ENCODE measurements at regions of chr19 and their contacts with region 1.

Region 1: DNA sequence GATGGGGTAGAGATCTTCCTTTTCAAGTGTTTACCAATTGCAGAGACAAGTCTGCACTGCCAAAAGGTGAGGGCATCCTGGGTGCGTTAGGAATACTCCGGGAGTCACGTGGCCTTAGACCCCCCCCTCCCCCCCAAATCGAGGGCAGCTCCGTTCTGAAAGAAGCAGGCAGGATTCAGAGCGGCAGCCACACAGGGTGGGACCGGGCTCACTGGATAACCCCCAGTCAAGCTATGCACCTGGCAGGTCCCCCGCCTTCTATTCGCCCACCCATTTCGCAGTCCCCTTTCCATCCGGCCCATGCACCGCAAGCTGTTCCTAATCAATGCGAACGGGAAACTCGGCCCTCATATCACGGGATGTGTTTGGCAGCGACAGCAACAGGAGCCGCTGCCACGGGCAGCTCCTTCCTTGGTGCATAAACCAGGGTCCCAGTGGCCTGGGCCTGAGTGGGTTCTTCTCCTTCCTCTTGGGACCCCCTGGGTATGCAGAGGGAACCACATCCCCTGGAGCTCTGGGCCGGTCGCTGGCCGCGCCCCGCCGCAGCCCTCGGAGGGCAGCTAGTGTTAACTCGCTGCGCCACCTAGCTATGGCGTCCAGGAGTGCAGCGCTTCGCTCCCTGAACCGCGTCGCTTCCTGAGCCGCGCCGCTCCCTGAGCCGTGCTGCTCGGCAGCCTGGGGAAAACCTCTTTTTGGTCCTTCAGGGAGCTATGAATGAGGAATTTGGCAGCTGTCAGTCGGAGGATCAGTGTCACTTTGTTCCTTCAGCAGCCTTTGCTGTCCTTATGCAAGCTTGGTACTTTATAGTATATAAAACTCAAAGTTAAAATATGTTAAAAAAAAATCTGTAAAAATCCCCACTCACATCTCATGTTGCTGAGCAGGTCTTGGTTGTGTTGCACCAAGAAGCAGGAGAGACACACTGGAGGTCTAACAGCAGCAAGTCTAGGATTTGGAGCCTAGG is 41.4 kb downstream of the LYL1 start:
- DNase-seq: peak; percentile 87
- H3K4me3 Mint-ChIP-seq: peak overlapping the region; percentile 71
- H3K27ac Mint-ChIP-seq: no peak overlapping the region
- H3K4me1 Mint-ChIP-seq: peaks cover 9% of the 10 kb centered on the region
- H3K27me3 Mint-ChIP-seq: peaks cover 4% of the 10 kb centered on the region

Region 2: DNA sequence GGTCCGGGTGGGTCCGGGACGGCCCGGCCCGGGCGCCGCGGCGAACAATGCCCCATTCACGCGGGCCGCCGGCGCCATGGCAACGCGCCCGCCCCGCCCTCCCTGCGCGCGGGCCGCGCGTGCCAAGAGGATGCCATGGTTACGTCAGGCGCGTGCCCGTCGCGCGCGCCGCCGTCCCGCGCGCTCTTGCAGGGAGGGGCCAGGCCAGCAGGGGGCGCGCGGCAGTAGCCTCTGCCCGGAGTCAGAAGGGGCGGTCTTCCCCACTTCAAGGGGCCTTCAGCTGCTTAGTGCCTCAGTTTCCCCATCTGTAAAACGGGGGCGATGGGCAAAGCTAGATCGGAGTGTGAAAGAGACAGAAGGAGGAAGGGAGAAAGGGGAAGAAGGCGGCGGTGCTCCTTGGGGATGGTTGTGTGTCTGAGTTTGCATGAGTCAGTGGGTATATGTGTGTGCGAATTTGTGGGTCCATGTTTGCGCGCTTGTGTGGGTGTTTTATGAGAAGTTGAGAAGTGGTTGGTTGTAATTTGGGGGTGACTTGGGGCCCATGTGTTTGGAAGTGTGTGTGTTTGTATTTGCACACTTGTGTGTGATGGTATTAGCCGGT is 77.6 kb before region 1 on chr19:
- CTCF ChIA-PET with region 1: interaction called, 110 read pairs
- intact Hi-C with region 1: loop called (anchors 1 kb)
- DNase-seq: peak; percentile 81
- H3K4me3 Mint-ChIP-seq: no peak overlapping the region
- H3K27ac Mint-ChIP-seq: no peak overlapping the region
- H3K4me1 Mint-ChIP-seq: no peaks in the 10 kb centered on the region
- H3K27me3 Mint-ChIP-seq: no peaks in the 10 kb centered on the region

Region 3: DNA sequence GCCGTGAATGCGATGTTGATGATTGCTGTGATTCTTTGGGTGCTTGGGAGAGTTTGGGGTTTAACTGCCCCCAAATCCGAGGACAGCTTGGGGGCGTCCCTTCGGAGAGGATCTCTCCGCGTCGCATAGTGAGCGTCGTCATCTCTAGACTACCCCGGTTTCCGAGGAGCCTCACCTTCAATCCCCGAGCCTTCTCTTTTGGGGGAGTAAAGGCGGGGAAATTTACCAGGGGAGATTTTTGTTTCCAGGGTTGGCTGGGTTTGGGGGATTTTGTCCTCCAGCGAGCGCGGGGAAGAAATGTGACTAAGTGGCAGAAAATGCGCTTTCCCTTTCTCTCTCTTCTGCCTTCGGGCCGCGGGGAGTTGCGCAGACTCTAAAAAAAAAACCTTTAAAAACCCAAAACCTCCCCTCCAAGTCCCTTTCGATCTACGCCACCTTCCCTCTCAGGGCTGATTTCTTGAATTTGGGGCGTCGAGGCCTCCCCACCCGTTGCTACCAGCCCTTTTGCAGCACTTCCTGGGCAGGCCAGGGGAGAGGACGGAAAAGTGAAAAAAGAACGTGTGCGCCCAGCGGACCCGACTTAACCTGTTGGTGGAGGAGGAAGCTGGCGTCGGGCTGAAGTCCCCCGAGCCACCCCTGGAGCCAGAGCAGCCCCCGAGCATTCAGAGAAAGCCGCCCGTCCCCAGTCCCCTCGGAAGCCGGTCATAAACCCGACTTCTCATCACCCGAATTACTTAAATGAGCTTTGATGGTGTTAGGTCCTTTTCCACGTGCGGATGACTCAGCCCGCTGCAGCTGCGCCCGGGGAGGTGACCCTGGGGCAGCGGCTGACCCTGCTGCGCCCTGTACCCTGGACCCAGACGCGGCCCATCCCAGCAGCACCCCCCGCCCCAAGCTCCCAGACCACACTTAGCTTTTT is 48.3 kb before region 1 on chr19:
- CTCF ChIA-PET with region 1: interaction called, 12 read pairs
- intact Hi-C with region 1: no loop called
- DNase-seq: peak; percentile 83
- H3K4me3 Mint-ChIP-seq: peak overlapping the region; percentile 73
- H3K27ac Mint-ChIP-seq: peak overlapping the region; percentile 83
- H3K4me1 Mint-ChIP-seq: peaks cover 22% of the 10 kb centered on the region
- H3K27me3 Mint-ChIP-seq: peaks cover 40% of the 10 kb centered on the region

Region 4: GRCh38 chr19:13033819-13034611 is 27.2 kb before region 1 on chr19:
- CTCF ChIA-PET with region 1: interaction called, 26 read pairs
- intact Hi-C with region 1: no loop called
- DNase-seq: peak; percentile 56
- H3K4me3 Mint-ChIP-seq: no peak overlapping the region
- H3K27ac Mint-ChIP-seq: no peak overlapping the region
- H3K4me1 Mint-ChIP-seq: no peaks in the 10 kb centered on the region
- H3K27me3 Mint-ChIP-seq: no peaks in the 10 kb centered on the region

Region 5: GRCh38 chr19:13093407-13094105 is 32.3 kb after region 1 on chr19:
- CTCF ChIA-PET with region 1: interaction called, 50 read pairs
- intact Hi-C with region 1: loop called (anchors 2 kb)
- DNase-seq: peak; percentile 90
- H3K4me3 Mint-ChIP-seq: no peak overlapping the region
- H3K27ac Mint-ChIP-seq: no peak overlapping the region
- H3K4me1 Mint-ChIP-seq: peaks cover 21% of the 10 kb centered on the region
- H3K27me3 Mint-ChIP-seq: peaks cover 29% of the 10 kb centered on the region

Measured in activated naive CD4-positive, alpha-beta T cell treated with anti-CD3 and anti-CD28 coated beads for 36 hours (primary cell).